OCI-LY7 (cell line): ENCODE measurements at regions of chr19 and their contacts with region 1.

Region 1: DNA sequence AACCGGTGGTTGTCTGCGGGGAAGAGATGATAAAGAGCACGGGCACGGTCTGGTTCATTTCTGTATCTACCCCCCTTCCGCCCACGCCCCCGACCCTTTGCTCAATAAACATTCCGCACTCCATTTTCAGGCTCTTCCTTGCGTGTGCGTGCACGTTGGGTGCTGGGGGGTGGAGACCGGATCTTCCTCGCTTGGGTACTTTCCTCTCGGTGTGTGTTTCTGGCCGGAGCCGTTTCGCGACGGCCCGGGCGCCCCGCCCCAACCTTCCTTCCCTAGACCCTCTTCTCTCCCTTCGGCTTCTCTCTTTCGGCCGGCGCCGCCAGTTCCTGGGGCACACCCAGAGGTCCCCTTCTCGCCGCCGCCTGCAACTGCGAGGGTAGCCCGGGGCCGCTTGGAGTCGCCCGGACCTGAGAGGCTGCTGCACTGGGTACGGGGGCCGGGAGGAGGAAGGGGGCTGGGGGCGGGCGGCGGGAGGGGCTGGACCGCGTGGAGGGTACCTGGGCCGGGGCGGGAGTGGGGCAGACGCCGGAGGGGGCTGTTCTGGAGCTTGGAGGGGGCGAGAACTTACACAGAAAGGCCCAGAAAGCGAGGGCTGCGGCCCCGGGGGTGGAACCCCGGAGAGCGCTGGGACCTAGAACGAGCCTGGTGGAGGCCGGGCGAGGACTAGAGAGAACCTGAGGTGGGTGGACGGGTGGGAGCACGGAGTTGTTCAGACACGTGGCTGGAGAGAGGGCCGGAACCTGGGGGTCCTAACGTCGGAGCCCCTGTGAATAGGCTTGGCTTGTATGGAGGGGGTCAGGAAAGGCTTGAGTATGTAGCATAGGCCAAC is at the start of gene ZNF581:
- DNase-seq: peak; percentile 88
- H3K4me3 ChIP-seq: peak within 1 kb of the TSS; percentile 98
- H3K27ac ChIP-seq: peak within 1 kb of the TSS; percentile 86
- H3K4me1 ChIP-seq: peaks cover 62% of the 10 kb centered on the region
- CTCF ChIP-seq: no peak
- total RNA-seq, gene ZNF581: 26.6 and 44.5 TPM in 2 replicates

Region 2: GRCh38 chr19:55605207-55605636 is 38.3 kb before region 1 on chr19:
- CTCF ChIA-PET with region 1: no interaction called
- POLR2A ChIA-PET with region 1: no interaction called
- intact Hi-C with region 1: no loop called
- DNase-seq: peak; percentile 98
- H3K4me3 ChIP-seq: peak overlapping the region; percentile 95
- H3K27ac ChIP-seq: peak overlapping the region; percentile 97
- H3K4me1 ChIP-seq: peaks cover 37% of the 10 kb centered on the region
- CTCF ChIP-seq: no peak

Region 3: GRCh38 chr19:56140583-56141416 is 497.2 kb after region 1 on chr19 and contains the start of gene ZNF444:
- CTCF ChIA-PET with region 1: no interaction called
- POLR2A ChIA-PET with region 1: no interaction called
- intact Hi-C with region 1: loop called (anchors 5 kb)
- DNase-seq: peak; percentile 98
- H3K4me3 ChIP-seq: peak within 1 kb of the TSS; percentile 87
- H3K27ac ChIP-seq: peak within 1 kb of the TSS; percentile 36
- H3K4me1 ChIP-seq: peaks cover 13% of the 10 kb centered on the region
- CTCF ChIP-seq: no peak
- total RNA-seq, gene ZNF444: 22.0 and 41.7 TPM in 2 replicates